Aorta (tissue), 5 donors: ENCODE measurements at regions of chr12 and their contacts with region 1.

Region 1: GRCh38 chr12:122265931-122266771 is at the start of gene VPS33A:
- DNase-seq: peak; percentile 97 to 99
- ATAC-seq: peak; percentile 98
- H3K4me3 ChIP-seq: peak within 1 kb of the TSS; percentile 53 to 77
- H3K27ac ChIP-seq: peak within 1 kb of the TSS; percentile 20 to 77
- H3K4me1 ChIP-seq: no peaks in the 10 kb centered on the region
- H3K27me3 ChIP-seq: no peaks in the 10 kb centered on the region
- total RNA-seq, gene VPS33A: 14.4 to 14.5 TPM

Region 2: GRCh38 chr12:122225683-122226407 is 40.3 kb before region 1 on chr12 and contains the start of gene DIABLO:
- intact Hi-C with region 1: loop called in 1 of 2 experiments (anchors 1 kb)
- DNase-seq: peak; percentile 100
- ATAC-seq: peak; percentile 100
- H3K4me3 ChIP-seq: peak within 1 kb of the TSS; percentile 15 to 59
- H3K27ac ChIP-seq: peak within 1 kb of the TSS; percentile 73 to 88
- H3K4me1 ChIP-seq: no peaks in the 10 kb centered on the region
- H3K27me3 ChIP-seq: no peaks in the 10 kb centered on the region
- total RNA-seq, gene DIABLO: 26.5 to 28.7 TPM

Region 3: DNA sequence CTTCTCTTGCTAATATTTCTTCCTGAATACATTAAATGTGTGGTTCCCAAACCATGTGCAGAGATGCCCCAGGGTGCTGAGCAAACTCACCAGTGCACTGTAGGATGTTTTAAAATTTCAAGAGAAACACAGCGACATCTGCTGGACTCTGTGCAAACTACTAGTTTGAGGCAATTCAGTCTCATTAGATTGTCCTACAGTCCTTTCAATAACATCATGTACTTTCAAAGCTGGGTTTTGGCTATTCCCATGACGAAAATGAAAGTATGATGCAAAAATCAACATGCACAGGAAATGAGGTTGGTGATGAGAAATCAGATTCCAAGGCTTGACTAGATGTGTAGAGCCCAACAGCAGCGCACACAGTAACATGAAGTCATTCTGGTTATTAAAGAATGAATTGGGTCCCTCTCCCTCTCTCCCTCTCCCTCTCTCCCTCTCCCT is 90.1 kb after region 1 on chr12:
- intact Hi-C with region 1: loop called in 1 of 2 experiments (anchors 10 kb)
- DNase-seq: no peak
- ATAC-seq: peak; percentile 79
- H3K4me3 ChIP-seq: no peak overlapping the region
- H3K27ac ChIP-seq: no peak overlapping the region
- H3K4me1 ChIP-seq: no peaks in the 10 kb centered on the region
- H3K27me3 ChIP-seq: no peaks in the 10 kb centered on the region